ENCODE measurements at regions of chr2 and their contacts with region 1.

Region 1: GRCh38 chr2:8277921-8278571 is 403.8 kb upstream of the ID2 start:
- DNase-seq: no peak
- H3K4me3 ChIP-seq: no peak overlapping the region
- H3K27ac ChIP-seq: no peak overlapping the region
- H3K4me1 ChIP-seq: no peaks in the 10 kb centered on the region
- H3K27me3 ChIP-seq: no peaks in the 10 kb centered on the region
- CTCF ChIP-seq: no peak
- POLR2A ChIP-seq: no peak

Region 2: GRCh38 chr2:6968319-6969100 is 1309.5 kb before region 1 on chr2:
- intact Hi-C with region 1: loop called (anchors 10 kb)
- DNase-seq: no peak
- H3K4me3 ChIP-seq: no peak overlapping the region
- H3K27ac ChIP-seq: no peak overlapping the region
- H3K4me1 ChIP-seq: no peaks in the 10 kb centered on the region
- H3K27me3 ChIP-seq: no peaks in the 10 kb centered on the region
- CTCF ChIP-seq: no peak
- POLR2A ChIP-seq: no peak

Region 3: GRCh38 chr2:8298783-8299182 is 20.7 kb after region 1 on chr2:
- intact Hi-C with region 1: no loop called
- DNase-seq: no peak
- H3K4me3 ChIP-seq: no peak overlapping the region
- H3K27ac ChIP-seq: no peak overlapping the region
- H3K4me1 ChIP-seq: no peaks in the 10 kb centered on the region
- H3K27me3 ChIP-seq: no peaks in the 10 kb centered on the region
- CTCF ChIP-seq: no peak
- POLR2A ChIP-seq: no peak